ENCODE measurements at regions of chr5 and their contacts with region 1.

Region 1: DNA sequence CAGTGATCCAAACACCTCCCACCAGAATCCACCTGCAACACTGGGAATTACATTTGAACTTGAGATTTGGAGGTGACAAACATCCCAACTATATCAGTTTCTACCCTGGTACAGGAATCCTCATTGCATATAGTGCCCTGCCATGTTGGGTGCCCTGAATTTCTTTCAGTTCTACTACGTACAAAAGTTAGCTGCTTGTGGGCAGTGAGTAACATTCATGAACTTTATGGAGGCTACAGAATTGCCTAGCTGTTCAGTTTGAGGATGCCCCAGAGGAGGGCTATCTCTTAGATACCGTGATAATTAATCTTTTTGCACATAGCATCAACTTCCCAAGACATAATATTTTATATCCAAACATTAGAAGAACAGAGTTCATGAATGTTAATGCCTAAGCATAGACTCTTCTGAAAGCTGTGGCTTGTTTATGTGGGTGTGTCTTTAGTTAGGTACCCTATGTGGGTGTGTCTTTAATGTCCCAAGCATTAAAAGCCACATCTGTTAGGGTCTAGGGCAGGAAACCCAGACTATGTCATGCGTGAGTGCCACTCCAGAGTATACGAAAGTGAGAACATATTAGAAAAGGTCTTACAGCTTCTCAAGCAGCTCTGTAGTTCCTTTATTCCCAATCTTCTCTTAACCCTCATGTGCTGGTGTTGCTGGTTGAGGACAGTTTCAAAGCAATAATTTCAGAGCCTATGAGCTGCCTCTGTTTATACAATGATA is 47.0 kb upstream of the CHD1 start:
- DNase-seq: no peak
- ATAC-seq: no peak
- H3K4me3 ChIP-seq: no peak overlapping the region
- H3K27ac ChIP-seq: no peak overlapping the region
- H3K4me1 ChIP-seq: peaks cover 29% of the 10 kb centered on the region
- H3K27me3 ChIP-seq: no peaks in the 10 kb centered on the region
- CTCF ChIP-seq: no peak

Region 2: GRCh38 chr5:97735209-97735608 is 1240.6 kb before region 1 on chr5:
- CTCF ChIA-PET with region 1: no interaction called
- POLR2A ChIA-PET with region 1: no interaction called
- intact Hi-C with region 1: no loop called
- DNase-seq: peak; percentile 85
- ATAC-seq: peak; percentile 95
- H3K4me3 ChIP-seq: no peak overlapping the region
- H3K27ac ChIP-seq: peak overlapping the region; percentile 28
- H3K4me1 ChIP-seq: peaks cover 11% of the 10 kb centered on the region
- H3K27me3 ChIP-seq: no peaks in the 10 kb centered on the region
- CTCF ChIP-seq: no peak

Region 3: DNA sequence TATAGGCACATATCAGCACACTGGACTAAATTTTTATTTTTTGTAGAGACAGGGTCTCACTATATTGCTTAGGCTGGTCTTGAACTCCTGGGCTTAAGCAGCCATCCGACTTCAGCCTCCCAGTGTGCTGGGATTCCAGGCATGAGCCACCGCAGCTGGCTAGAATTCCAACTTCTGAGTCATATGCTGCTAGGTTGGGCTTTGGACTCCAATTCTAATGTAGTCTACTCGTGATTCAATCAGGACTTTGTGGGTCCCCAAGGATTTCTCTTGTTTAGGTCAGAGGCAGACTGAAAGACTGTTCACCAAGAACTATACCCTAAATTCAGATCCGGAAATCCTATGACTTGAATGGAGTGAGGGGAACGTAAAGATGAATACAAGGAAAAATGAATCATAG is 21.2 kb after region 1 on chr5:
- CTCF ChIA-PET with region 1: no interaction called
- POLR2A ChIA-PET with region 1: interaction called, 10 read pairs
- intact Hi-C with region 1: no loop called
- DNase-seq: peak; percentile 16
- ATAC-seq: no peak
- H3K4me3 ChIP-seq: no peak overlapping the region
- H3K27ac ChIP-seq: no peak overlapping the region
- H3K4me1 ChIP-seq: no peaks in the 10 kb centered on the region
- H3K27me3 ChIP-seq: no peaks in the 10 kb centered on the region
- CTCF ChIP-seq: no peak

Region 4: DNA sequence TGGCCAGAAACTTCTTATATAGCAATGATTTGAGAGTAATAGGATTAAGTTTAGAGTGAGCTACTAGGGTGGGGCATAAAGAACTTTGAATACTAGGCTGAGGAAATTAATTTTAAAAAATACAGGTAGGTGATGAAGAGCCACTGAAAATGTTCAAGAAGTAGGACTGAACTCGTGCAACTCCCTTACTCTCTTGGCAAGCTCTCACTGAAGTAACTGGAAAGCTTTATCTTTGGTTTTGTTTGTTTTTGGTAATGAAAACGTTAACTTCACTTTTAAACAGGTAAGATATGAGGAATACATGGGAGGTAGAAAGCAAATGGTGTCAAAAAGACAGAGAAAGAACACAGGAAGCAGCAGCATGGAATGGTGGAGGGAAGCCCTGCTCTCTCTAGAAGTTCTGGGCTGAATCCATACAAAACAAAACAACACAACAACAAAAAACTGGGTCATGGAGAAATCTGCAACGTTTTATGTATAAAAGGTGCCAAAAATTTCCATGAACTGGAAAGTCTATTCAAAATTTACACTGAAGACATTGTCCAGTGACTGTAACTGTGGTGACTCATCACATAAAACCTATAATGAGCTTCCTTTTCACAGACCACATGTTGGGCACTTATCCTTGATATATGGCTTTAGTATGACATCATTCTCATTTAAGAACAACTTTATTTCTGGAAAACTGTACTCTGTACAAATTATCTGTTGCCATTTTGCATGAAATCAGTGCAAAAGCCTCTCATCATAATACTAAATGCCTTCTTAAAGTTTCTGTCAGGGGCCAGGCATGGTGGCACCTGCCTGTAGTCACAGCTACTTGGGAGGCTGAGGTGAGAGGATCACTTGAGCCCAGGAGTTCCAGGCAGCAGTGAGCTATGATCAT is 44.2 kb after region 1 on chr5:
- CTCF ChIA-PET with region 1: no interaction called
- POLR2A ChIA-PET with region 1: no interaction called
- intact Hi-C with region 1: loop called (anchors 1 kb)
- DNase-seq: peak; percentile 94
- ATAC-seq: peak; percentile 95
- H3K4me3 ChIP-seq: no peak overlapping the region
- H3K27ac ChIP-seq: no peak overlapping the region
- H3K4me1 ChIP-seq: peaks cover 18% of the 10 kb centered on the region
- H3K27me3 ChIP-seq: no peaks in the 10 kb centered on the region
- CTCF ChIP-seq: no peak

Region 5: DNA sequence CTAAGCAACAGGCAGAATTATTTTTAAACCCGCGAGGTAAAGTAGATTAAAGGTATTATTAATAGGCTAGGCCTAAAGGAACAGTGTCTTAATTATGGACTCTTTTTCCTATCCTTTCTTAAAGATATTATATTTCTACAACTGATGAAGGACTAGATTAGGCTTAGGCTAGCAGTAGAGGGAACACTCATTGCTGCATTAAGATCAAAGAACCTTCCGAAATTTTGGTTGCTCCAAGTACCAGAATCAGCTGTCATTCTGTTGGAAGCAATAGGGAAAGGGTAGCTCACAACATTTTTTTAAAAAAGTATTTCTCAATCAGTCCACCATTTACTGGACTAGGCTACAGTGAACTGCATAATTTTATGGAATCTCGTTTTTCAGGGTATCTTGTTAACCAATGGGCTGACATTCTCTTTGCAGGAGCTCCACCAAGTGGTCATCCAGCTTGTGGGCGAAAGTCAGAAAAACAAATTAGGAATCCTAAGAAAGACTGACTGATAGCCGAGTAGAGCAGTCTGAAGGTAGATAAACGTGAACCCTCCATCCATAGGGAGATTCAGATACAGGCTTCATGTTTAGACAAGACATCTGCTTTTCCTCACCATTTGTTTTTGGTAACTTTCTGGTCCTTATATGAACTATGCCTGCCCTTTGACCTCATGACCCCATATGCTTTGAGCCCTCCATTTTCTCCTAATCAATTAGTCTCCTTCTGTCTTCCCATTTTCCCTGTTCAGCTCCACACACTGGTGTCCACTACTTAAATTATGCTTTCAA is 56.6 kb after region 1 on chr5:
- CTCF ChIA-PET with region 1: no interaction called
- POLR2A ChIA-PET with region 1: no interaction called
- intact Hi-C with region 1: loop called (anchors 2 kb)
- DNase-seq: peak; percentile 91
- ATAC-seq: peak; percentile 84
- H3K4me3 ChIP-seq: peak overlapping the region; percentile 67
- H3K27ac ChIP-seq: peak overlapping the region; percentile 25; the same call in 1 of the 2 replicates
- H3K4me1 ChIP-seq: peaks cover 29% of the 10 kb centered on the region
- H3K27me3 ChIP-seq: no peaks in the 10 kb centered on the region
- CTCF ChIP-seq: peak; percentile 98

Region 6: GRCh38 chr5:99068944-99069650 is 93.3 kb after region 1 on chr5:
- CTCF ChIA-PET with region 1: interaction called, 10 read pairs
- POLR2A ChIA-PET with region 1: no interaction called
- intact Hi-C with region 1: no loop called
- DNase-seq: no peak
- ATAC-seq: no peak
- H3K4me3 ChIP-seq: no peak overlapping the region
- H3K27ac ChIP-seq: no peak overlapping the region
- H3K4me1 ChIP-seq: no peaks in the 10 kb centered on the region
- H3K27me3 ChIP-seq: no peaks in the 10 kb centered on the region
- CTCF ChIP-seq: no peak

Region 7: GRCh38 chr5:99104538-99105132 is 128.8 kb after region 1 on chr5:
- CTCF ChIA-PET with region 1: interaction called, 17 read pairs
- POLR2A ChIA-PET with region 1: no interaction called
- intact Hi-C with region 1: no loop called
- DNase-seq: peak; percentile 65
- ATAC-seq: peak; percentile 38; the same call in 1 of the 2 replicates
- H3K4me3 ChIP-seq: no peak overlapping the region
- H3K27ac ChIP-seq: no peak overlapping the region
- H3K4me1 ChIP-seq: no peaks in the 10 kb centered on the region
- H3K27me3 ChIP-seq: peaks cover 31% of the 10 kb centered on the region
- CTCF ChIP-seq: peak; percentile 69; the same call in 1 of the 2 replicates

Measured in PC-3 (cell line).